PC-9 (cell line): ENCODE measurements at regions of chr20 and their contacts with region 1.

Region 1: GRCh38 chr20:34704177-34705007 is at the start of gene TP53INP2:
- DNase-seq: peak; percentile 61 to 80
- H3K4me3 ChIP-seq: peak within 1 kb of the TSS; percentile 64
- H3K27ac ChIP-seq: peak within 1 kb of the TSS; percentile 16; the same call in 1 of the 2 replicates
- H3K4me1 ChIP-seq: peaks cover 34% of the 10 kb centered on the region
- H3K27me3 ChIP-seq: no peaks in the 10 kb centered on the region
- CTCF ChIP-seq: no peak
- total RNA-seq, gene TP53INP2: 4.4 and 4.9 TPM in 2 replicates

Region 2: DNA sequence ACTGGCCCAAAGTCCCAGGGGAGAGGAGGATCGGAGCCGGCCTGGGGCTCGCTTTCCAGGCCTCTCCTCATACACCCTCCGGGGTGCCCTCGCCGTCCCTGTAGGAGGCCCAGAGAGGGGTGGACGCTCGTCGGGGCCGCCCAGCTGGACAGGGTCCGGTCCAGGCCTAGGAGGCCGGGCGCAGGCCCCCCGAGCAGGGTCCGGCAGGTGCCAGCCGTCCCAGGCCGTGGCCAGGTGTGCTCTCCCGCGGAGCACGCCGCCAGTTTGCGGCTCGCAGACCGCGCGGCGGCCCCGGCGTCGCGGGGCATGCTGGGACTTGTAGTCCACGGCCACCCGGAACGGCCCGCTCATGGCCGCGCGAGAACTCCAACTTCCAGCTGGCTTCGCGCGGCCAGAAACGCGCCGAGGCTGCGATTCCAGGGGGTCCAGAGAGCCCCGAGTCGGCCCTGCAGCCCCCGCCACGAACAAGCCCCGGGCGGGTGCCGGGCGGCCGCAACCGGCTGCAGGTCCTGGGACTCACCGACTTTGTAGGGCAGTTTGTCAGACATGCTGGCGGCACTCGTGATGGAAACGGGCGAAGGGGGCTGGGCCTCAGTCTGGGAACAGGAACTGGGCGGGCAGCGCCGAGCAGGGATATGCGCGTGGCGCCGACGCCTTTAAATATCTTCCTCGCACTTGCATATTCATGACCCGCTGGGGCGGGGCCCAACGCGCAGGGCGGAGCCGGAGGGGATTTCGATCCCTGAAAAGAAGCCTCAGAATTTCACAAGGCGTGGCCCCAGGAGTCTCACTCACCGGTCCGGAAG is 401.5 kb before region 1 on chr20 and contains the start of gene AHCY:
- CTCF ChIA-PET with region 1: no interaction called
- POLR2A ChIA-PET with region 1: no interaction called
- intact Hi-C with region 1: loop called (anchors 2 kb)
- DNase-seq: peak; percentile 94 to 99
- H3K4me3 ChIP-seq: peak within 1 kb of the TSS; percentile 99
- H3K27ac ChIP-seq: peak within 1 kb of the TSS; percentile 81
- H3K4me1 ChIP-seq: peaks cover 20% of the 10 kb centered on the region
- H3K27me3 ChIP-seq: no peaks in the 10 kb centered on the region
- CTCF ChIP-seq: peak; percentile 13; the same call in 1 of the 2 replicates
- total RNA-seq, gene AHCY: 247 and 273 TPM in 2 replicates

Region 3: DNA sequence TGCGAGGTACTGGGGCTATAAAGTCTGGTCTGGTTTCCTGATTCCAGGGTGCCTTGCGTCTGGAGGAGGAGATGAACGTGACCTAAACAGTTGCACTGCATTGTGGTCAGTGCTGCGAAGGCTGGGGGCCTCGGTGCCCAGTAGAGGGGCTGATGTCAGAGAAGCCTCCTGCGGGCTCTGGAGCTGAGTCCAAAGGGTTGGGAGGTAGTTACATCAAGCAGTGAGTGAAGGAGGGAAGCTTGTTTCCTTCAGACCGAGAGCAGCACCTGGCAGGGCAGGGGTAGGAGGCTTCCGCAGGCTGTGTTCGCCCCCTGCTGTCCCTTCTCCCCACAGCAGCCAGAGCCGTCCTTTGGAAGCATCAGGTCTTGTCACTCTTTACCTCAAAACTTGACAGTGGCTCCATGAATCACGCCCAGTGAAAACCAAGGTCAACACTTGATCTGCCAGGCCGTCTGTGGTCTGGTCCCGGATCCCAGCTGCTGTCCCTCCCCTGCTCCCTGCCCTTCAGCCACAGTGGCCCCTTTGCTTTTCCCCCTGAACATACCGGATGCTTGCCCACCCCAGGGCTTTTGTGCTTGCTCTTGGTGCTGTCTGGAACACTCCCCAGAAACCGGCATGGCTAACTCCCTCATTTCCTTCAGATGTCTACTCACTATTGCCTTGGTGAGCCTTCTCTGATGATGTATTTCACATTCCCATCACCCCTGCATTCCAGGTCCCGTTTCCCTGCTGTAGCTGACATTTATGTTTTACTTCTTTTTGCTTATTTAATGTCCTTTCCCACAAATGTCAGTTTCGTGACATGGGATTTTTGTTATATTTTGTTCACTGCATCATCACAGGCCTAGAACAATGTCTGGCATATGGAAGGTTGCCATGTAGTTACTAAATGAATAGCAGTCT is 181.2 kb before region 1 on chr20:
- CTCF ChIA-PET with region 1: no interaction called
- POLR2A ChIA-PET with region 1: no interaction called
- intact Hi-C with region 1: loop called (anchors 2 kb)
- DNase-seq: peak; percentile 44 to 55
- H3K4me3 ChIP-seq: no peak overlapping the region
- H3K27ac ChIP-seq: no peak overlapping the region
- H3K4me1 ChIP-seq: peaks cover 37% of the 10 kb centered on the region
- H3K27me3 ChIP-seq: no peaks in the 10 kb centered on the region
- CTCF ChIP-seq: peak; percentile 57

Region 4: DNA sequence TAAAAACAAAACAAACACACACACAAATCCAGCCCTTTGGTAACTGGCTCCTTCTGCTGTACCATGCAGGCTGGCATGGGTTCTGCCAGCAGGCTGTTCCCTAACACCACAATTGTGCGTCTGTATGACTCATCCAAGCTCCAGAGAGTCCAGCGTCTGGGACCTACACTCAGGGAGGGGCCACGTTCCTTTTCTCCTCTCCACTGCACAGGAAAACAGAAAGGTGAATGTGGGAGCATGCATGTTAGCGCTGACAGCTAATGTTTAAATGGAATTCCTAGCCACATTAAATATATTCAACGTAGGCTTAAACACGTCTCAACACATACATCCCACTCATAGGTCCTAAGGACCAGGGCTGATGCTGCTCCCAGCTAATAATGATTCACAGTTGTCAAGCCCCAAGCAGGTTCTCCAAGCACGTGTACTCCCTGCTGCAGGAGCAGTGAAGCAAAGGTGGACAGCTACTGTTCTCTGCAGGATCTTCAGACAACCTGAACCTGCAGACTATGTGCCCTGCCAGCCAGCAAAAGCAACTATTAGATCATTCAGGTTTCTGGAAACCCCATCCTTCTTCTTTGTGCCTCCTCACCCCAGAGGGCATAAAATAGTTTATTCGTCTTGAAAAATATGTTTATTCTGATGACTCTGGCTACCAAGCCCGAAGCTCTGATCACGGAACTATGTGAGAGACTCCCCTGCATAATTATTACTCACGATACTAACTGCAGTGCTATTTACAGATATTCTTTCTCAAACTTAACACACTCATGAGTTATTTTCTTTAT is 125.0 kb before region 1 on chr20:
- CTCF ChIA-PET with region 1: interaction called, 6 read pairs
- POLR2A ChIA-PET with region 1: interaction called, 4 read pairs
- intact Hi-C with region 1: loop called (anchors 1 kb)
- DNase-seq: peak; percentile 61 to 78
- H3K4me3 ChIP-seq: no peak overlapping the region
- H3K27ac ChIP-seq: no peak overlapping the region
- H3K4me1 ChIP-seq: peaks cover 31% of the 10 kb centered on the region
- H3K27me3 ChIP-seq: no peaks in the 10 kb centered on the region
- CTCF ChIP-seq: peak; percentile 79

Region 5: GRCh38 chr20:34600892-34601653 is 103.3 kb before region 1 on chr20:
- CTCF ChIA-PET with region 1: no interaction called
- POLR2A ChIA-PET with region 1: interaction called, 10 read pairs
- intact Hi-C with region 1: no loop called
- DNase-seq: no peak
- H3K4me3 ChIP-seq: no peak overlapping the region
- H3K27ac ChIP-seq: no peak overlapping the region
- H3K4me1 ChIP-seq: no peaks in the 10 kb centered on the region
- H3K27me3 ChIP-seq: no peaks in the 10 kb centered on the region
- CTCF ChIP-seq: no peak

Region 6: GRCh38 chr20:35001596-35002362 is 297.4 kb after region 1 on chr20:
- CTCF ChIA-PET with region 1: no interaction called
- POLR2A ChIA-PET with region 1: no interaction called
- intact Hi-C with region 1: no loop called
- DNase-seq: no peak
- H3K4me3 ChIP-seq: no peak overlapping the region
- H3K27ac ChIP-seq: no peak overlapping the region
- H3K4me1 ChIP-seq: no peaks in the 10 kb centered on the region
- H3K27me3 ChIP-seq: no peaks in the 10 kb centered on the region
- CTCF ChIP-seq: no peak; the same call in 1 of the 2 replicates